ENCODE measurements at regions of chr19 and their contacts with region 1.

Region 1: GRCh38 chr19:44890366-44891015 is 563 bp upstream of the TOMM40 start:
- DNase-seq: peak; percentile 100
- ATAC-seq: peak; percentile 91
- H3K4me3 ChIP-seq: peak overlapping the region; percentile 45 to 64 (median 48)
- H3K27ac ChIP-seq: peak overlapping the region; percentile 94
- H3K4me1 ChIP-seq: peaks cover 28% of the 10 kb centered on the region
- H3K27me3 ChIP-seq: no peaks in the 10 kb centered on the region; a peak in 1 of 5 replicates
- CTCF ChIP-seq: no peak
- EP300 ChIP-seq: peak in 1 of 2 experiments; percentile 38; a peak in 1 of 4 replicates
- POLR2A ChIP-seq: peak; percentile 79 to 88
- RAD21 ChIP-seq: no peak

Region 2: DNA sequence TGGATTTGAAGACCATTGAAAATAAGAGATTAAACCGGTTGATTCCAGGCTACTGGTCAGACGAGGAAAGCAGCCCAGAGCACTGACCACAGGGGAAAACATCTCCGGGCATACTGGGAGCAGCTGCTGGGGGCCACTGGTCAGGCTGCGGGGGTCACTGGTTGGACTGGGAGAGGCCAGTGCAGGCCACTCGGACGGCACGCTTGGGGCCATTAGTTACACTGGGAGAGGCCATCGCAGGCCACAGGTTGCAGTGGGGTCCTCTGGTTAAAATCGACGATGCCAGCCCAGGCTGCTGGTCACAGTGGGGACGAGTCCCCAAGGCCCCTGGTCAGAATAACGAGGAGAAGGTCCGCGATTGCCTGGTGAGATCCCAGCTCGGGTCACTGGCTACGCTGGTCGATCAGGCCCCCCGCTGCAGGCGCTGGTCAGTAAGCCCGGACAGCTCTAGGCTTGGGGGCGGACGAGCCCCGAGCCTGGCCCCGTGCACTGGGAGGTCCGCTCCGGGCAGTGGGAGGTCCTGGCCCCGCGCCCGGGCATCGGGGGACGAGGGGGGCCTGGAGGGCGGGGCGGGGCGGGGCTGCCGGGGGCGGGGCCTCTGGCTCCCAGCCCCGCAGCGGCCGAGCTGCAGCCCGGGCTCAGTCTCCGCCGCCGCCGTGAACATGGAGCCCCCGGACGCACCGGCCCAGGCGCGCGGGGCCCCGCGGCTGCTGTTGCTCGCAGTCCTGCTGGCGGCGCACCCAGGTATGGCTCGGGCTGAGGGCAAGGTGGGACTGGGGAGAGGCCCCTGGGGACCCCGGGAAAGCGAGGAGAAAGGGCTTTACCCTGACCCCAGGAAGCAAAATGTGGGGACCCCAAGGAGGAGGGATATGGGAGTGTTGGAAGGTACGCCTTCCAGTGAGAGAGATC is 81.8 kb before region 1 on chr19 and contains the start of gene BCAM:
- CTCF ChIA-PET with region 1: no interaction called
- POLR2A ChIA-PET with region 1: interaction called, 10 read pairs
- in situ Hi-C with region 1: no loop called
- intact Hi-C with region 1: no loop called
- DNase-seq: peak; percentile 65
- ATAC-seq: peak; percentile 79
- H3K4me3 ChIP-seq: peak within 1 kb of the TSS; percentile 65 to 99 (median 94)
- H3K27ac ChIP-seq: peak within 1 kb of the TSS; percentile 87
- H3K4me1 ChIP-seq: peaks cover 64% of the 10 kb centered on the region
- H3K27me3 ChIP-seq: no peaks in the 10 kb centered on the region; a peak in 1 of 5 replicates
- CTCF ChIP-seq: no peak
- EP300 ChIP-seq: no peak; a peak in 1 of 4 replicates
- POLR2A ChIP-seq: peak in 1 of 2 experiments; percentile 94; a peak in 3 of 4 replicates
- RAD21 ChIP-seq: no peak
- total RNA-seq, gene BCAM: 30.6 and 51.2 TPM in 2 replicates

Region 3: DNA sequence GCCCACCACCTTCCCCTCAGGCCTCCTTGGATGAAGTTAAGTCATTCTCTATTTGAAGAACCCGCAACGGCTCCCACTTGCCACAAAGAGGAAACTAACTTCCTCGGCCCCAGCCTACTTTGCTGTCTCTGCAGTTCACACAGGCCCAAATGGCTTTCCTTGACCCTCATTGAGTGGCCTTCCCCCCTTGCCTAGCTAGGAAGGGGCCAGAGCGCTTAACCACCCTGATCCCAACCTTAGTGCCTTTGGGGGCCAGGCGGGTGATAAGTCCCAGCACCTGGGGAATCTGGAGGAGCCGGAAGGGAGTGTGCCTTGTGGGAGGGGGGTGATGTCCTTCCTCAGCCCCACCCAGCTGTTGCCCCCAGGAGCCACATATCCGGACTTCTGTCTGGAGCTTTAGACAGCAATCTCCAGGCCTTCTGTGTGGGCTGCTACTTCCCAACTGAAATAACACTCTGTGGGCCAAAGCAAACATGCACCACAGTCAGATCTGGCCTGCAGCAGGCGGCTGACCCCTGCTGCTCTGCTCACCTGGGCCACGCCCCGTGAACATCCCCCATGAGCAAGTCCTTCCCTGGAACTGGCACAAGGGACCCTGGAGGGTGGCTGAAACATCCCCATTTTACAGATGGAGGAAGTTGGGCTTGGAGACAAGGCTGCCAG is 33.9 kb before region 1 on chr19:
- CTCF ChIA-PET with region 1: no interaction called
- POLR2A ChIA-PET with region 1: interaction called, 11 read pairs
- in situ Hi-C with region 1: no loop called
- intact Hi-C with region 1: no loop called
- DNase-seq: peak; percentile 64
- ATAC-seq: peak; percentile 76
- H3K4me3 ChIP-seq: peak overlapping the region in 1 of 3 experiments; percentile 20; a peak in 1 of 6 replicates
- H3K27ac ChIP-seq: peak overlapping the region; percentile 72
- H3K4me1 ChIP-seq: peaks cover 69% of the 10 kb centered on the region
- H3K27me3 ChIP-seq: no peaks in the 10 kb centered on the region
- CTCF ChIP-seq: peak; percentile 29; the same call in 1 of the 2 replicates
- EP300 ChIP-seq: 0 out of 4 replicates have a peak, but pooled peaks of 1 of the 2 experiments have one; percentile 7
- POLR2A ChIP-seq: peak in 1 of 2 experiments; percentile 19; a peak in 1 of 4 replicates
- RAD21 ChIP-seq: no peak

Region 4: GRCh38 chr19:44903602-44904425 is 13.3 kb after region 1 on chr19:
- CTCF ChIA-PET with region 1: no interaction called
- POLR2A ChIA-PET with region 1: interaction called, 33 read pairs
- in situ Hi-C with region 1: no loop called
- intact Hi-C with region 1: no loop called
- DNase-seq: peak; percentile 80
- ATAC-seq: peak; percentile 50
- H3K4me3 ChIP-seq: peak overlapping the region; percentile 7 to 93 (median 7); a peak in 4 of 6 replicates
- H3K27ac ChIP-seq: peak overlapping the region; percentile 90
- H3K4me1 ChIP-seq: peaks cover 45% of the 10 kb centered on the region
- H3K27me3 ChIP-seq: no peaks in the 10 kb centered on the region; a peak in 1 of 5 replicates
- CTCF ChIP-seq: peak; percentile 98
- EP300 ChIP-seq: peak in 1 of 2 experiments; percentile 53; a peak in 1 of 4 replicates
- POLR2A ChIP-seq: peak; percentile 32 to 62
- RAD21 ChIP-seq: peak; percentile 95

Region 5: GRCh38 chr19:44925114-44925891 is 34.8 kb after region 1 on chr19:
- CTCF ChIA-PET with region 1: no interaction called
- POLR2A ChIA-PET with region 1: interaction called, 12 read pairs
- in situ Hi-C with region 1: no loop called
- intact Hi-C with region 1: no loop called
- DNase-seq: peak; percentile 95
- ATAC-seq: peak; percentile 64
- H3K4me3 ChIP-seq: peak overlapping the region in 1 of 3 experiments; percentile 50; a peak in 2 of 6 replicates
- H3K27ac ChIP-seq: peak overlapping the region; percentile 96
- H3K4me1 ChIP-seq: peaks cover 93% of the 10 kb centered on the region
- H3K27me3 ChIP-seq: no peaks in the 10 kb centered on the region
- CTCF ChIP-seq: peak; percentile 43
- EP300 ChIP-seq: peak; percentile 88 to 97
- POLR2A ChIP-seq: peak in 1 of 2 experiments; percentile 16; a peak in 1 of 4 replicates
- RAD21 ChIP-seq: peak; percentile 55

Region 6: DNA sequence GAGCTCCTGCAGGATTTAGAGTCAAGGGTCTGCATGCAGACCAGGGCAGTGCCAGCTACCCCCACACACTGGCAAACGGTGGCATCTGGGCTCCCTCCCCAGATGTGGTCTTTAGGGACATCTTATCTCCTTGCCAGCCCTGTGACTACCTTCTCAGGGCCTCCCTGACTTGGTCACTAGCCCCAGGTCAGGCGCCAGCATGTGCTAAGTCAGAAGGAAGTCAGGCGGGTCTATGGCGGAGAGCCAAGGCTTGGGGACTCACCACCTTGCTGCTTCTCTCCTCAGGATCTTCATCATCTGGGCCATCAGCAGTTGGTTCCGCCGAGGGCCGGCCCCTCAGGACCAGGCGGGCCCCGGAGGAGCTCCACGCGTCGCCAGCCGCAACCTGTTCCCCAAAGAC is 82.3 kb after region 1 on chr19:
- CTCF ChIA-PET with region 1: no interaction called
- POLR2A ChIA-PET with region 1: no interaction called
- in situ Hi-C with region 1: no loop called
- intact Hi-C with region 1: no loop called
- DNase-seq: no peak
- ATAC-seq: no peak
- H3K4me3 ChIP-seq: no peak overlapping the region
- H3K27ac ChIP-seq: no peak overlapping the region
- H3K4me1 ChIP-seq: peaks cover 18% of the 10 kb centered on the region
- H3K27me3 ChIP-seq: no peaks in the 10 kb centered on the region
- CTCF ChIP-seq: no peak
- EP300 ChIP-seq: no peak
- POLR2A ChIP-seq: no peak
- RAD21 ChIP-seq: no peak

Region 7: GRCh38 chr19:44988896-44989556 is 98.5 kb after region 1 on chr19:
- CTCF ChIA-PET with region 1: no interaction called
- POLR2A ChIA-PET with region 1: no interaction called
- in situ Hi-C with region 1: no loop called
- intact Hi-C with region 1: no loop called
- DNase-seq: peak; percentile 52
- ATAC-seq: peak; percentile 72
- H3K4me3 ChIP-seq: no peak overlapping the region
- H3K27ac ChIP-seq: no peak overlapping the region
- H3K4me1 ChIP-seq: no peaks in the 10 kb centered on the region
- H3K27me3 ChIP-seq: no peaks in the 10 kb centered on the region
- CTCF ChIP-seq: peak; percentile 83
- EP300 ChIP-seq: no peak
- POLR2A ChIP-seq: no peak
- RAD21 ChIP-seq: peak; percentile 58; the same call in 1 of the 2 replicates

Region 8: GRCh38 chr19:45047188-45047797 is 156.8 kb after region 1 on chr19:
- CTCF ChIA-PET with region 1: no interaction called
- POLR2A ChIA-PET with region 1: interaction called, 11 read pairs
- in situ Hi-C with region 1: no loop called
- intact Hi-C with region 1: no loop called
- DNase-seq: no peak
- ATAC-seq: no peak
- H3K4me3 ChIP-seq: peak overlapping the region in 1 of 3 experiments; percentile 64; a peak in 1 of 6 replicates
- H3K27ac ChIP-seq: peak overlapping the region; percentile 83
- H3K4me1 ChIP-seq: peaks cover 60% of the 10 kb centered on the region
- H3K27me3 ChIP-seq: no peaks in the 10 kb centered on the region
- CTCF ChIP-seq: no peak
- EP300 ChIP-seq: no peak
- POLR2A ChIP-seq: no peak
- RAD21 ChIP-seq: no peak

Region 9: DNA sequence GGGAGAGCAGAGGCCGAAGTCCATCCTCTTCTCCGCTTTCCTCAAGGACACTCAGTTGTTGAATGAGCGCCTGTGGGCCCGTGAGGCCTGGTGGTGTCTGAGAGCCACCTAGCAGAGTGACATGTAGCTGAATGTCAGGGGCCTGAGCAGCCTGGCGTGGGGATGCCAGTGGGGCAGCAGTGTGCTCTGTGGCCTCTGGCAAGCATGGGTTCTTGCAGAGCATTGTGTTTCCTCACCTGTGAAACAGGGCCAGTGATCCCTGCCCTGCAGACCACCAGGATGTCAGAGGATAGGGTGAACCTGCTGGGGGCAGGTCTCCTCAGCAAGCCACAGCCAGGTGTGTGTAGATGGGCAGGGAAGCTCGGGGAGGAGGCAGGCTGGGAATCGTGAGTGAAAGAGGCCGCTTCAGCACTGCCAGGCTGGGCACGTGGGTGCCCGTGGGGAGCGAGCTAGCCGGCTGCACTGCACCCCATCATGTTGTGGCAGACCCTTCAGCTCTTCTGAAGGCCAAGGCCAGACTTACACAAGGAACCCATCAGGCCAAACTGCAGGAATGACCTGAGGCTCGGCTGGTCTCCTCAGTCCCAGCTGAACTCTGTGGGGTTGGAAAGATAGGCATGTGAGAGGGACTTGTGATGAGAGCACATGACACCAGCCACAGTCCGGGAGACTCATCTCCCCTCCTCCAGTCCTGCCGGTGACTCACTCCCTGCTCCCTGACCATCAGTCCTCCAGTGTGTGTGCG is 207.5 kb after region 1 on chr19:
- CTCF ChIA-PET with region 1: no interaction called
- POLR2A ChIA-PET with region 1: no interaction called
- in situ Hi-C with region 1: no loop called
- intact Hi-C with region 1: no loop called
- DNase-seq: peak; percentile 90
- ATAC-seq: peak; percentile 82
- H3K4me3 ChIP-seq: peak overlapping the region; percentile 4 to 58 (median 5); a peak in 5 of 6 replicates
- H3K27ac ChIP-seq: peak overlapping the region; percentile 74
- H3K4me1 ChIP-seq: peaks cover 92% of the 10 kb centered on the region
- H3K27me3 ChIP-seq: no peaks in the 10 kb centered on the region; a peak in 1 of 5 replicates
- CTCF ChIP-seq: no peak; the same call in 1 of the 2 replicates
- EP300 ChIP-seq: peak in 1 of 2 experiments; percentile 34; a peak in 1 of 4 replicates
- POLR2A ChIP-seq: peak; percentile 51 to 68
- RAD21 ChIP-seq: peak; percentile 14; the same call in 1 of the 2 replicates